ENCODE measurements at regions of chr15 and their contacts with region 1.

Region 1: GRCh38 chr15:99076552-99077308 is 28.1 kb upstream of the SYNM start:
- DNase-seq: peak; percentile 74
- H3K4me3 ChIP-seq: peak overlapping the region; percentile 36 to 60
- H3K27ac ChIP-seq: peak overlapping the region in 1 of 2 experiments; percentile 45; a peak in 2 of 4 replicates
- H3K4me1 ChIP-seq: no peaks in the 10 kb centered on the region; a peak in 1 of 4 replicates
- H3K27me3 ChIP-seq: no peaks in the 10 kb centered on the region
- CTCF ChIP-seq: peak; percentile 91
- EP300 ChIP-seq: no peak
- RAD21 ChIP-seq: peak; percentile 94

Region 2: GRCh38 chr15:98442379-98442833 is 634.3 kb before region 1 on chr15:
- CTCF ChIA-PET with region 1: interaction called, 48 read pairs
- POLR2A ChIA-PET with region 1: no interaction called
- DNase-seq: peak; percentile 61
- H3K4me3 ChIP-seq: peak overlapping the region in 1 of 2 experiments; percentile 27; a peak in 1 of 4 replicates
- H3K27ac ChIP-seq: no peak overlapping the region
- H3K4me1 ChIP-seq: no peaks in the 10 kb centered on the region
- H3K27me3 ChIP-seq: peaks cover 23% of the 10 kb centered on the region; the same call in 1 of the 2 replicates
- CTCF ChIP-seq: peak; percentile 91
- EP300 ChIP-seq: no peak
- RAD21 ChIP-seq: peak; percentile 82

Region 3: DNA sequence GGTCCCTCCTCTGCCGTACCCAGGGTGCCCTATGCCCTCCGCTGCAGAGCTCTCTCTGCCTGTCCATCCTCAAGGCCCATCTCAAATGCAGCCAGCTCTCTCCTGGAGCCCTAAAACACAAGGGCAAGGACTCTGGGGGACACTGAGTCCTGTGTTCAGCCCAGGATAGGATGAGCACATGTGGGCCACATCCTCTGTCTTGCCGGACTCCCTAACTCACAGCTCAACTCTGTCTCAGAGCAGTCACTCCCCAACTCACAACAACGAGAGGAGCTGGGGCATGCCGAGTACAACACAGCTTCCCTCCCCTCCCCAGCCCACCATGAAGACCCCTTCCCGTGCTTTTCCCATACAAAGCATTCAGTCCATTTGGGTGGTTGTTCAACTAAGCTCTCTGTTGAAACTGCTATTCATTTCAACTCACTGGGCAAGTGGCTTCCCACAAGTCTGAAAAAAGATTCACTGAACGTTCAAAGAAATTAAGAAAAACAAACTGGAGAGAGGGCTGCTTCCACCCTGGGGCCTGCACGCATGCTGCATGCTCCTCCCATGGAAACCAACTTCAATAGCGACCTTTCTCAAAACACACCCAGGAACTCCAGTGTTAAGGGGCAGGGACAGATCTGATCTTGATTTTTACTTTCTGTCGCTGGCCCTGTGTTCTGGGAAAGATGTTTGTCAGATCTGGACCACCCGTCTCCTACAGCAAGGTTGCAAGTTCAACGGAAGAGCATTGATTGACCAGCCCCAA is 552.6 kb before region 1 on chr15:
- CTCF ChIA-PET with region 1: interaction called, 41 read pairs
- POLR2A ChIA-PET with region 1: no interaction called
- DNase-seq: no peak
- H3K4me3 ChIP-seq: no peak overlapping the region
- H3K27ac ChIP-seq: no peak overlapping the region
- H3K4me1 ChIP-seq: no peaks in the 10 kb centered on the region
- H3K27me3 ChIP-seq: peaks cover 11% of the 10 kb centered on the region; the same call in 1 of the 2 replicates
- CTCF ChIP-seq: no peak
- EP300 ChIP-seq: no peak
- RAD21 ChIP-seq: no peak

Region 4: GRCh38 chr15:98904544-98904943 is 172.2 kb before region 1 on chr15:
- CTCF ChIA-PET with region 1: interaction called, 10 read pairs
- POLR2A ChIA-PET with region 1: no interaction called
- DNase-seq: peak; percentile 84
- H3K4me3 ChIP-seq: no peak overlapping the region
- H3K27ac ChIP-seq: peak overlapping the region; percentile 48 to 73; a peak in 3 of 4 replicates
- H3K4me1 ChIP-seq: peaks cover 24 to 28% of the 10 kb centered on the region in 2 experiments; a peak in 3 of 4 replicates
- H3K27me3 ChIP-seq: no peaks in the 10 kb centered on the region
- CTCF ChIP-seq: peak; percentile 75
- EP300 ChIP-seq: no peak; a peak in 1 of 4 replicates
- RAD21 ChIP-seq: peak; percentile 93

Region 5: GRCh38 chr15:99090011-99090699 is 13.4 kb after region 1 on chr15:
- CTCF ChIA-PET with region 1: interaction called, 12 read pairs
- POLR2A ChIA-PET with region 1: no interaction called
- DNase-seq: no peak
- H3K4me3 ChIP-seq: no peak overlapping the region
- H3K27ac ChIP-seq: no peak overlapping the region
- H3K4me1 ChIP-seq: no peaks in the 10 kb centered on the region
- H3K27me3 ChIP-seq: no peaks in the 10 kb centered on the region
- CTCF ChIP-seq: no peak
- EP300 ChIP-seq: no peak
- RAD21 ChIP-seq: no peak

Region 6: DNA sequence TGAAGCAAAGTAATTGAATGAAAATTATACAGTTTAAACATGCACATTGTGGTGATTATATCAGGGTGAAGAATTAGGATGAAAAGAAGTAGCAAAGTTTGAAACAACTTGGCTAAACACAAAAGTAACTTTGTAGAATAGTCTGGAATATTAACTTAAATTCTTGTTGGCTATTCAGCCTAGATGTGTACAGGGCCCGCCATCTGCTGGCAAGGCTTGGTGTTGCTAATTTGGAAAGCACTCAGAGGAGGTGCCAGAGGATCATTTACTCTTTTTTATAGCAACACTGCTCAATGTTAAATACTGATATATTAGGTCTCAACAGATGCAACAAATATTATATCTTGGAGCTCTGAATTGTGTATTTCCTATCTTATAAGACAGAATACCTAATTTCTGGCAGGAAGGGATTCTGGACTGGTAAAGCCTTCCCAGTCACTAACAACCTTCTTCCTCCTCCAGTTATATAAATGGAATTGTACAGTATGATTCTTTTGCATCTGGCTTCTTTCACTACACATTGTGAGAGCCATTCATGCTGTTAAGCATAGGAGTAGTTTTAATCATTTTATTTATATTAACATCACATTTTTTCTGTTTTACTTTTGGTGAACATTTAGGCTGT is 136.6 kb after region 1 on chr15:
- CTCF ChIA-PET with region 1: interaction called, 22 read pairs
- POLR2A ChIA-PET with region 1: no interaction called
- DNase-seq: peak; percentile 66
- H3K4me3 ChIP-seq: peak overlapping the region in 1 of 2 experiments; percentile 27; a peak in 1 of 4 replicates
- H3K27ac ChIP-seq: no peak overlapping the region; a peak in 1 of 4 replicates
- H3K4me1 ChIP-seq: peaks cover 0 to 6% of the 10 kb centered on the region in 2 experiments; a peak in 1 of 4 replicates
- H3K27me3 ChIP-seq: no peaks in the 10 kb centered on the region
- CTCF ChIP-seq: peak; percentile 96
- EP300 ChIP-seq: no peak
- RAD21 ChIP-seq: peak; percentile 98

Region 7: GRCh38 chr15:99224372-99225214 is 147.9 kb after region 1 on chr15:
- CTCF ChIA-PET with region 1: no interaction called
- POLR2A ChIA-PET with region 1: no interaction called
- DNase-seq: no peak
- H3K4me3 ChIP-seq: no peak overlapping the region
- H3K27ac ChIP-seq: no peak overlapping the region
- H3K4me1 ChIP-seq: no peaks in the 10 kb centered on the region
- H3K27me3 ChIP-seq: no peaks in the 10 kb centered on the region
- CTCF ChIP-seq: no peak
- EP300 ChIP-seq: no peak
- RAD21 ChIP-seq: no peak

Measured in SK-N-SH (cell line).